ENCODE measurements at regions of chr7 and their contacts with region 1.

Region 1: GRCh38 chr7:47561594-47562439 is 20.1 kb downstream of the TNS3 start:
- DNase-seq: no peak
- H3K4me3 ChIP-seq: no peak overlapping the region
- H3K27me3 ChIP-seq: no peaks in the 10 kb centered on the region
- CTCF ChIP-seq: no peak

Region 2: GRCh38 chr7:47254081-47255006 is 307.5 kb before region 1 on chr7:
- CTCF ChIA-PET with region 1: no interaction called
- POLR2A ChIA-PET with region 1: interaction called, 12 read pairs
- DNase-seq: no peak
- H3K4me3 ChIP-seq: peak overlapping the region; percentile 57
- H3K27me3 ChIP-seq: no peaks in the 10 kb centered on the region
- CTCF ChIP-seq: peak; percentile 49

Region 3: DNA sequence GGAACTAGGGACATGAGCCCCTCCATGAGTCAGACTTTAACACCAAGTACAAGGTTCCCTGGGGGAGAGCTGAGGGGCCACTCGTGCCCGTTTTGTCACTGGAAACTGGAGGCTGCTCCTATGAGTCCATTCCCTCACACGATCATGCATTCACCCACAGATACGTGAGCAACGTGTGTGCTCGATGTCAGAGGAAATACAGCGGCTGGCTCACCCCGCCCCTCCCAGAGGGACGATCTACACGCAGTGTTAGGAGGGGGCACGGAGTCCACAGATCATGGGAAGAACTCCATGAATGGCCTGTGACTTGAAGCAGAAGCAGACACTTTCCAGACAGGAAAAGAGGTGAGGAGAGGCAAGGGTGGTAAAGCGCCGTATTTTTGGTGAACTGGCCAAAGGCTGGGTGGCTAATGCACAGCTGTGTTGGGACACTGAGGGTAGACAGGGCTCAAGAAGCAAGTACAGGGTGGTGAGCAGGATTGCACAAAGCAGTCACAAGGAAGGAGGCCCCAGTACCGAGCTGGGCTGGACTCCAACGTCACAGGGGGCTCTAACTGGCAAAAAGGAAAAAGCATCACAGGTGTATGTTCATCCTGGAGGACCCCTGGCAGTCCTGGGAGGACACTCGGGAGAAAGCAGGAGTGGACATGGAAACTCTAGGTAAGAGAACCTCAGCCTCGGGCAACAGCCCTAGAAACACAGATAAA is 21.3 kb before region 1 on chr7:
- CTCF ChIA-PET with region 1: no interaction called
- POLR2A ChIA-PET with region 1: no interaction called
- DNase-seq: no peak
- H3K4me3 ChIP-seq: no peak overlapping the region
- H3K27me3 ChIP-seq: no peaks in the 10 kb centered on the region
- CTCF ChIP-seq: no peak

Region 4: DNA sequence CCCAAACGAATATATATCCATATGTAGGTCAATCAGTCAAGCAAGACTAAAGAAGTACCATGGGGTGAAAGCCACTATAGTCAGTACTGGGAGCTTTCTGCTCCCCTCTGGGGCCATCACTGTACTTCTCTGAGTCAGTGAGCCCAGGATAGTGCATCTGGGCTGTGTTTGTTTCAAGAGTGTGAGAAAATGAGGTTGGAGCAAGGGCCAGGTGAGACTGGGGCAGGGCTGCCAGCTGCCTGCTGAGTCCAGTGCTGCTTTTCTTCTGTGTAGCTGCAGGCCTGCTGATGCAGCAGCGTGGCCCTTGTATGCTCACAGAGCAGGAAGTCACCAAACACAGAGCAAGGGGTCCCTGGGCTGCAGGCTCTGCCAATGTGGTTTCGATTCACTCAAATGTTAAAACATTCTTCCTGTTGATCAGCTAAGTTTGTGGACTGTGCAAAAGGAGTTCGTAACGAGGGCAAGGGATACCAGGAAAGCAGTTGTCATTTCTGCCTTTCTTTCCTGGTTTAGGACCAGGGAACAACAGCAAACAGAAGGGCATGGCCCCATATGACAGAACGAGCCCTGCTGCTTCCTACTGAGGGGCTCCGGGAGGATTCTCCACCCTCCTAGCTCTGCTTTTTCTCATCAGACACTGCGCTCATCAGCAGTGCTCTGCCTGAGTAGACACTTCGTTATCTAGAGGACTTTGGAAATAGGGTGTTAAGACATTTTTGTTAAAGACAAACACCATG is 85.5 kb after region 1 on chr7:
- CTCF ChIA-PET with region 1: no interaction called
- POLR2A ChIA-PET with region 1: no interaction called
- DNase-seq: no peak
- H3K4me3 ChIP-seq: no peak overlapping the region
- H3K27me3 ChIP-seq: no peaks in the 10 kb centered on the region
- CTCF ChIP-seq: no peak

Region 5: GRCh38 chr7:47937065-47937683 is 375.4 kb after region 1 on chr7:
- CTCF ChIA-PET with region 1: no interaction called
- POLR2A ChIA-PET with region 1: interaction called, 13 read pairs
- DNase-seq: no peak
- H3K4me3 ChIP-seq: no peak overlapping the region
- H3K27me3 ChIP-seq: no peaks in the 10 kb centered on the region
- CTCF ChIP-seq: no peak

Measured in BJ (cell line).